ENCODE measurements at regions of chr4 and their contacts with region 1.

Region 1: DNA sequence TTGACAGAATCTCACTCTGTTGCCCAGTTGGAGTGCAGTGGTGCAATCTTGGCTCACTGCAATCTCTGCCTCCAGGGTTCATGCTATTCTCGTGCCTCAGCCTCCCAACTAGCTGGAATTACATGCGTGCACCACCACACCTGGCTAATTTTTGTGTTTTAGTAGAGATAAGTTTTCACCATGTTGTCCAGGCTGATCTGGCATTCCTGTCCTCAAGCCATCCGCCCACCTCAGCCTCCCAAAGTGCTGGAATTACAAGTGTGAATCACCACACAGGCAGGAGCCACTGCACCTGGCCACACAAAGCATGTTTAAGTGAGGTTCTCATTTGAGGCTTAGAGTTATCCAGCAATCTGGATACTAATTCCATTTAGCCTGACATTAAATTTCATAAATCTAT is 180.9 kb upstream of the GRID2 start:
- DNase-seq: no peak

Region 2: GRCh38 chr4:92091335-92091734 is 31.6 kb before region 1 on chr4:
- intact Hi-C with region 1: loop called in 1 of 2 experiments (anchors 2 kb)
- DNase-seq: no peak

Region 3: GRCh38 chr4:92447255-92447905 is 324.5 kb after region 1 on chr4:
- intact Hi-C with region 1: no loop called
- DNase-seq: no peak